A673 (cell line): ENCODE measurements at regions of chr2 and their contacts with region 1.

Region 1: GRCh38 chr2:145760781-145761649 is 1241.1 kb upstream of the ZEB2 start:
- DNase-seq: no peak
- H3K4me3 ChIP-seq: no peak overlapping the region
- H3K27ac ChIP-seq: no peak overlapping the region
- H3K4me1 ChIP-seq: peaks cover 12% of the 10 kb centered on the region
- H3K27me3 ChIP-seq: no peaks in the 10 kb centered on the region
- CTCF ChIP-seq: no peak

Region 2: DNA sequence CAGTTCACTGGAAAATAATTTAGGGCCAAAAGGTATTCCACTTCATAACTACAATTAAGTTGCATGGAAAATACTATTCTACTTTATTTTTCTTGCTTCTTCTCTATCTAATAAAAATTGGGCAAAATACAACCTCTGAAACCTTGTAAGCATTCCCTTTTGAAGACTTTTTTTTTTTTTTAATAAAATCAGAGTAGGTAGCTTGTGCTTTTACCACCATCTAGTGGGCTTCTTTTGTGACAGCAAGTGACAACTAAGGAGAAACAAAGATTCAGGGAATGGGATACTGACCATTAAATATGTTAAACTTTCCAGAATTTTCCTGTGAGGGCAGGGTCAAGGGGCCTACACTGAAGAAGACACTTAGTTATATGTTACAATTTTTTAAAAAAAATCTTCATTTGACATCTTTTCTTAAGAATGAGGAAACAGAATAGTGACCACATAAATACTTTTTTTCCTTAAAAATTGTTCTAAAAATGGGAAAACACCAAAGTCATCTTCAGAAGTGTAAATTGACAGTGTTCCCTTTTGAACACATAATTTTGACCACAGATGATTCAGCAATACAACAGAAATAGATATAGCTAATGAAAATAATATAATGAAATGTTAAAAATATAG is 900.6 kb after region 1 on chr2:
- CTCF ChIA-PET with region 1: no interaction called
- POLR2A ChIA-PET with region 1: no interaction called
- intact Hi-C with region 1: loop called (anchors 5 kb)
- DNase-seq: peak; percentile 72
- H3K4me3 ChIP-seq: no peak overlapping the region
- H3K27ac ChIP-seq: no peak overlapping the region
- H3K4me1 ChIP-seq: peaks cover 5% of the 10 kb centered on the region
- H3K27me3 ChIP-seq: no peaks in the 10 kb centered on the region
- CTCF ChIP-seq: peak; percentile 80